HEK293 (cell line): ENCODE measurements at regions of chr19 and their contacts with region 1.

Region 1: DNA sequence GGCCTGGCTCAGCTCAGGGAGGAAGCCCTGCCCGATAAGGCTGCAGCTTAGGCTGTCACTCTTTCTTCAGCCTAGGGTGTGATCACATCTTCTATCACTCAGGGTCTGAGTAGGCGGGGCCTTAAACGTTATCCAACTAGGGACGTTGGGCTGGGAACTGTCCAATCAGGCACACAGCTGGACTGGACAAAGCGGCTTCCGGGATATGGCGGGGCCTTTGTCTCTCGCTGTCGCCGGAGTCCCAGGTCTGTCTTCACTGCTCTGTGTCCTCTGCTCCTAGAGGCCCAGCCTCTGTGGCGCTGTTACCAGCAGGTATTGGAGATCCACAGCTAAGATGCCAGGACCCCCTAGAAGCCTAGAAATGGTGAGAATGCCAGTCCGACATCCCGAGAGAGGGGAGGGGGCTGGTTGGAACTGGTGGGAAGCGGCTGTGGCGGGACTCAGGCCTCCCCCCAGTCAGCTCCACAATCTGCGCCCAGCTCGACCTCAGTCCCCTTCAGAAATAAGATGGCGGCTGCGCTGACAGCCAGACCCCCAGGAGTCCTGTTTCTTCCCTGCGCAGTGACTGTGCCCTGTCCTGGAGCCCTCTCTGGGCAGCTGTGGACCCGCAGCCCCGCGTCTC is at the start of gene ZNF254:
- H3K4me3 ChIP-seq: peak within 1 kb of the TSS; percentile 87
- H3K27ac ChIP-seq: peak within 1 kb of the TSS; percentile 76
- H3K4me1 ChIP-seq: no peaks in the 10 kb centered on the region
- CTCF ChIP-seq: no peak

Region 2: DNA sequence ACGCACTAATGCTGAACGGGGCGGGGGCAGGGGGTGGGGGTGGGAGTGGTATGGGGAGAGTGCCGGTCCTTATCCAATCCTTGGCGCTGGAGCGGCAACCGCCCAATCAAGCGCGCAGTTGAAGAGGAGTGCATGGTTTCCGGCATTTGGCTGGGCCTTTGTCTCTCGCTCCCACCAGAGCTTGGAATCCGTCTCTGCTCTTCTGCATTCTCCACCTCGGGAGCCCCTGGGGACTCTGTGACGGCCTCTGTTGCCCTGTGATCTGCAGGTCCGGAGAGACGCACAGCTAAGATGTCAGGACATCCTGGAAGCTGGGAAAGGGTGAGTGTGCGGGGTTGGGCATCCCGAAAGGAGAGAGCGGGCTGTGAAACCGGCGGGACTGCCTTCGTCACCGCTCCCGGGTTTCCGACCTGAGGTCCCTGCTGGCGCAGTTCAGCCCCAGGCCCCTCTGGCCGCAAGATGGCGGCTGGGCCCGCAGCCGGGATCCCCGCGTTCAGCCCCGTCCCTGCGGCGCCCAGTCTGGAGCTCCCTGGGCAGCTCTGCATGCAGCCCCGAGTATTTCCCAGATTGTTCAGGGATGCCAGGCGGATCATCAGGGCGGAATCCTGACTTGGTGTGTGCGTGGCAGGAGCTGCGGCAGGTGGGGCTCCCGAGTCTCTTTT is 53.7 kb before region 1 on chr19:
- CTCF ChIA-PET with region 1: no interaction called
- POLR2A ChIA-PET with region 1: interaction called, 28 read pairs
- H3K4me3 ChIP-seq: peak overlapping the region; percentile 95
- H3K27ac ChIP-seq: peak overlapping the region; percentile 89
- H3K4me1 ChIP-seq: no peaks in the 10 kb centered on the region
- CTCF ChIP-seq: peak; percentile 33; the same call in 1 of the 2 replicates

Region 3: DNA sequence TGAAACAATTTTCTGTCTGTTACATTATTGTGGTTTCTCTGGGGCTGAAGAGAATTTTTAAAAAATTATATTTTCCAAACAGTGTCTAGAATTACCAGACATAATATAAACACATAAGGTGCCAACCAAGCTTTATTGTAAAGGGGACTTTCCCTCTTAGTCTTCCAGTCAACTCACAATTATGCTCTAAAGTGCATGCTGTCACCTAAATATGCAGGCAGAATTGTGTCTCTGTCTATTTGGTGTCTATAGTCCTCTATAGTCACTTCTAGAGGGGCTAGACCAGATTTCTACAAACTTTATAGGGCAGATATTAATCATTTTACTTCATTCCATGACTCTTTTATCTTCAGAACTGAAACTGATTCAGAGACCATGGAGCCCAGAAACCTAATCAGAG is 12.7 kb after region 1 on chr19:
- CTCF ChIA-PET with region 1: interaction called, 3 read pairs
- POLR2A ChIA-PET with region 1: interaction called, 13 read pairs
- H3K4me3 ChIP-seq: no peak overlapping the region
- H3K27ac ChIP-seq: no peak overlapping the region
- H3K4me1 ChIP-seq: no peaks in the 10 kb centered on the region
- CTCF ChIP-seq: no peak